ENCODE measurements at regions of chr14 and their contacts with region 1.

Region 1: GRCh38 chr14:70317969-70318634 is 41.4 kb downstream of the COX16 start:
- DNase-seq: peak; percentile 63
- H3K4me3 Mint-ChIP-seq: no peak overlapping the region
- H3K27ac Mint-ChIP-seq: no peak overlapping the region
- H3K4me1 Mint-ChIP-seq: no peaks in the 10 kb centered on the region
- H3K27me3 Mint-ChIP-seq: no peaks in the 10 kb centered on the region
- CTCF ChIP-seq: peak; percentile 51

Region 2: GRCh38 chr14:69726761-69727511 is 591.2 kb before region 1 on chr14:
- CTCF ChIA-PET with region 1: no interaction called
- POLR2A ChIA-PET with region 1: no interaction called
- intact Hi-C with region 1: loop called (anchors 10 kb)
- DNase-seq: peak; percentile 79
- H3K4me3 Mint-ChIP-seq: peak overlapping the region; percentile 59
- H3K27ac Mint-ChIP-seq: no peak overlapping the region
- H3K4me1 Mint-ChIP-seq: peaks cover 6% of the 10 kb centered on the region
- H3K27me3 Mint-ChIP-seq: no peaks in the 10 kb centered on the region
- CTCF ChIP-seq: peak; percentile 94

Region 3: GRCh38 chr14:70045844-70046535 is 272.1 kb before region 1 on chr14:
- CTCF ChIA-PET with region 1: interaction called, 3 read pairs
- POLR2A ChIA-PET with region 1: no interaction called
- intact Hi-C with region 1: loop called (anchors 2 kb)
- DNase-seq: peak; percentile 68
- H3K4me3 Mint-ChIP-seq: no peak overlapping the region
- H3K27ac Mint-ChIP-seq: no peak overlapping the region
- H3K4me1 Mint-ChIP-seq: peaks cover 13% of the 10 kb centered on the region
- H3K27me3 Mint-ChIP-seq: peaks cover 13% of the 10 kb centered on the region
- CTCF ChIP-seq: peak; percentile 88

Region 4: DNA sequence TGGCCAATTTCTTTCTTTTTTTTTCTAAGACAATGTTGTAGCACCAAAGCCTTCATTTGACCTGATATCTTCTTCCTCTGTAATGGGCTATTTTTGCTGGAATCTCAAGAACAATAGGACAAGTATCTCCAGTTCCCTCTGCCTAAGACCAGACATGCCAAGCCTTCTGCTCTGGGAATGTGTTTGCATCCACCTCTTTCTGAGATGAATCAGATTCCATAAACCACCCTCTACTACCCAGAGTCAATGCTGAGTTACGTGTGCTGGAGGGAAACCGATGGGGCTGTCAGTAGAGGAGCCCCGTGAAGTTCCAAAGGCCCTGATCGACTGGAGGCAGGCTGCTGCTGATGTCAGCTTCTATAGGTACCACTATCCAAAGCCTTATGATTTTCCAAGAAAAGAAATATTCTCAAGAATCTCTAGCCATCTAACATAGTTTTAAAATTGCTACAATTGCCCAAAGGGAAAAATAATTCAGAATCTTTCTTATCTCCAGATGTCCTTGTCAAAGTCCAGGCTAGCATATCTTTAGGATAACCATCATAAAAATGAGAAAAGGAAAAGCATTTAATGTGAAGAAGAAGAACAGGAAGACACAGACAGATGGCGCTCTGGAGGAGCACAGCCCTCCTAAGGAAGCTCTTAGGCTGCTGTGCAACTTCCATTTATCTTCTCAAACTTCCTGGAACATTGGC is 231.3 kb before region 1 on chr14:
- CTCF ChIA-PET with region 1: interaction called, 11 read pairs
- POLR2A ChIA-PET with region 1: no interaction called
- intact Hi-C with region 1: loop called (anchors 1 kb)
- DNase-seq: peak; percentile 51
- H3K4me3 Mint-ChIP-seq: no peak overlapping the region
- H3K27ac Mint-ChIP-seq: no peak overlapping the region
- H3K4me1 Mint-ChIP-seq: no peaks in the 10 kb centered on the region
- H3K27me3 Mint-ChIP-seq: peaks cover 39% of the 10 kb centered on the region
- CTCF ChIP-seq: peak; percentile 63

Region 5: GRCh38 chr14:70350078-70350477 is 32.0 kb after region 1 on chr14:
- CTCF ChIA-PET with region 1: no interaction called
- POLR2A ChIA-PET with region 1: no interaction called
- intact Hi-C with region 1: no loop called
- DNase-seq: no peak
- H3K4me3 Mint-ChIP-seq: no peak overlapping the region
- H3K27ac Mint-ChIP-seq: no peak overlapping the region
- H3K4me1 Mint-ChIP-seq: peaks cover 6% of the 10 kb centered on the region
- H3K27me3 Mint-ChIP-seq: no peaks in the 10 kb centered on the region
- CTCF ChIP-seq: no peak

Measured in MCF 10A (cell line).